ENCODE measurements at regions of chr4 and their contacts with region 1.

Region 1: DNA sequence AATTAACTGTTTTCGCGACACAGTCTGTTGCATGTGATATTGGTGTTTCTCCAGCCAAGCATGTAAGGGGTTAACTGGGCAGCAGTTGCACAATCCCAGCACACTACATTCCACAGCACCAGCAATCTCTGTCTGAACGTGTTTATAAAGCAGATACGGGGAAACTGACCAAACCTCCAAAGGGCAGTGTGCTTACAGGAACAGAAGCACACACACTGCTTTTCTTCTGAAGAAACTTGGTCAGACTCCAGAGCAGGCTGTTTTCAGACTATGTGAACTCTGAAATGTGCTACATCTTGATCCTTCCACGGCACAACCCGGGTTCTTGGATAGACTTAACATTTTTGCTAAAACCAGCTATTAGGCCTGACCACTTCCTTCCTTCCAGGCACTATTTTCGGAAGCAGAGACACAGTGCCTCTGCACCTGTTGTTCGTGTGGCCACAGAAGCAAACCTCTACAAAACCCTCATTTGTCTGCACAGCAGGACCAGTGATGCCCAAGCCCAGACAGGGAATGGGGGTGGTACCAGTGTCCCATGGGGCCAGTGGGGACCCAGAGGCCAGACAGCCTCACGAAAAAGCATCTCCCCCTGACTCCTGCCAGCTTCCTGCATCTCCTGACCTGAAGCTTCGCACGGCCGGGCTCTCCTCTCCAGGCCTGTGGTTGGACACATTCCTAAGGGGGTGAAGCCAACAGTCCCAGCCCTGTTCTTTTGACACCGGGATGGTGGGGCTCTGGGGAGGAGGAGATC is 90.1 kb downstream of the IRF2 start:
- DNase-seq: peak in 1 of 5 donors; percentile 31
- ATAC-seq: peak; percentile 5 to 72 (median 34)
- H3K4me3 ChIP-seq: peak overlapping the region in 9 of 12 donors; percentile 5 to 42 (median 28)
- H3K27ac ChIP-seq: peak overlapping the region; percentile 60 to 96 (median 90)
- H3K4me1 ChIP-seq: peaks cover 18 to 78% (median 64%) of the 10 kb centered on the region in 12 donors
- H3K27me3 ChIP-seq: no peaks in the 10 kb centered on the region
- CTCF ChIP-seq: no peak
- POLR2A ChIP-seq: peak in 1 of 2 donors; percentile 6

Region 2: DNA sequence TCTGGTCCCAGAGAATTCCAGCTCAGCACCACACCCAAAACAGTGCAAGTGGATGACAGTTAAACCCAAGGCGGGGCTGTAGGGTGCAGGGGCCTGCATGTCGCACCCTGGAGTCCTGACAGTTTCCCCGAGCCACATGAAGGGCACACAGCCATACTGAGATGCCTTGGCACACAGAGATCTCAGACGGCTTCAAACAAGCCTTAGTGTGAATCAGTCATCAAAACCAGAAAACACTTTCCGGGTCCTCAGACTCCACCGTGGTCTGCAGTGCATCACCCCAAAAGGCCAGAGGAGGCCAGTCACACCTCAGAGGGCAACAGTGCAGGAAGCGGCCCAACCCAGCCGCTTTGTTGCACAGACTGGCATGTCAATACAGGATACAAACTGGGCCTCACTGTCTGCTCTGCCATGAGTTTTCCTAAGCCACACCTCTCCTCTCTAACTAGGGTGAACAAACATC is 102.0 kb before region 1 on chr4:
- intact Hi-C with region 1: loop called in 2 of 10 experiments (anchors 10 kb)
- DNase-seq: no peak
- ATAC-seq: peak in 3 of 4 donors; percentile 56 to 71 (median 65)
- H3K4me3 ChIP-seq: no peak overlapping the region
- H3K27ac ChIP-seq: peak overlapping the region in 4 of 12 donors; percentile 17 to 39 (median 26)
- H3K4me1 ChIP-seq: peaks cover 0 to 33% (median 6%) of the 10 kb centered on the region in 12 donors
- H3K27me3 ChIP-seq: no peaks in the 10 kb centered on the region
- CTCF ChIP-seq: peak in 2 of 12 donors; percentile 18 to 25
- POLR2A ChIP-seq: no peak

Region 3: DNA sequence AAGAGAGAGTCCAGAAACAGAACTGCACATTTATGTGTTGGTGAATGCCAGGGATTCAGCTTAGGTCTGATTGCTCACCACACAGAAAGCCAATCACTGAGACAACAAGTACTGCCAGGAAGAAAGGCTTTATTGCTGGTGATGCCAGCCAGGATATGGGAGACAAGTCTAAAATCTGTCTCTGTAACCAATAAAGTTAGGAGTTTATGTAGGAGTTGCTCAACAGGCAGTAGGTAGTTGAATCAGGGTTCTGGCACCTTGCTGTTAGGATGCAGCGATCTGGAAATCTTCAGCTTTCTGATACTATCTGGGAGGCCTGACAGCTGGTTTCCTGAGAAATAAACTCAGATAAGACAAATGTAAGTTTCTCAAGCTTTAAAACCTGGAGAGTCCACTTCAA is 46.3 kb before region 1 on chr4:
- intact Hi-C with region 1: loop called in 1 of 10 experiments (anchors 2 kb)
- DNase-seq: no peak
- ATAC-seq: no peak
- H3K4me3 ChIP-seq: no peak overlapping the region
- H3K27ac ChIP-seq: no peak overlapping the region
- H3K4me1 ChIP-seq: peaks cover 0 to 23% (median 2%) of the 10 kb centered on the region in 12 donors
- H3K27me3 ChIP-seq: no peaks in the 10 kb centered on the region
- CTCF ChIP-seq: no peak
- POLR2A ChIP-seq: no peak

Region 4: GRCh38 chr4:184343502-184344177 is 40.6 kb before region 1 on chr4:
- intact Hi-C with region 1: loop called in 7 of 10 experiments (anchors 2 to 5 kb)
- DNase-seq: peak; percentile 75 to 85 (median 83)
- ATAC-seq: peak; percentile 75 to 84 (median 76)
- H3K4me3 ChIP-seq: peak overlapping the region; percentile 31 to 77 (median 62)
- H3K27ac ChIP-seq: peak overlapping the region in 11 of 12 donors; percentile 71 to 94 (median 85)
- H3K4me1 ChIP-seq: peaks cover 8 to 71% (median 47%) of the 10 kb centered on the region in 12 donors
- H3K27me3 ChIP-seq: no peaks in the 10 kb centered on the region
- CTCF ChIP-seq: no peak
- POLR2A ChIP-seq: no peak

Region 5: GRCh38 chr4:184364100-184364921 is 19.9 kb before region 1 on chr4:
- intact Hi-C with region 1: no loop called
- DNase-seq: no peak
- ATAC-seq: peak in 1 of 4 donors; percentile 11
- H3K4me3 ChIP-seq: no peak overlapping the region
- H3K27ac ChIP-seq: no peak overlapping the region
- H3K4me1 ChIP-seq: peaks cover 0 to 29% (median 7%) of the 10 kb centered on the region in 12 donors
- H3K27me3 ChIP-seq: no peaks in the 10 kb centered on the region
- CTCF ChIP-seq: no peak
- POLR2A ChIP-seq: no peak

Region 6: DNA sequence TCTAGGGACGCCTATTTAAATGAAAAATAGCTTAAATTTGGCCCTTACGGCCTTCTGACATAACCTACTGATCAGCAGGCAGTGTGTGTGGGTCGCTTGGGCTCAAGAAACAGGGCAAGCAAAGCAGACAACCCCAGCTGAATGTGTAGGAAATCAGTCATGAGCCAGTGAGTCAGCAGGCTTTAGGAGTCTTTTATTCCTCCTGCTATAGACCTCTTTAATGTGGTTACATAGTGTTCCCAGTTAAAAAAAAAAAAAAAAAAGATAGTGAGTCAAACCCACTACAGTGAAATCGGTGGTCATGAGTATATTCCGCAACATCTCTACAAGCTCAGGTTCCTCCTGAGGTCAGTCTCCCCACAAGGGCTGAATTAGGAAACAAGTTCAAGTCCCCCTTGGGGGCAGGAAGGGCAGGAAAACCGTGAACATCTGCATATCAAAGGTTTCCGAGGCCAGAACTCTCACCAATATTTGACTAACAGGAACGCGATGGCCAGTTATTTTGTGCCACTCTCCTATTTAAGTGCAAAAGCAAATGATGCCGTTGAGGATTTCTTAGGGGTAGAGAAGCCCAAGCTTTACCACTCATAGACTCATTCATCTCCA is 408.8 kb after region 1 on chr4:
- intact Hi-C with region 1: no loop called
- DNase-seq: no peak
- ATAC-seq: peak; percentile 42 to 60 (median 50)
- H3K4me3 ChIP-seq: no peak overlapping the region
- H3K27ac ChIP-seq: peak overlapping the region in 10 of 12 donors; percentile 0 to 68 (median 27)
- H3K4me1 ChIP-seq: peaks cover 0 to 71% (median 35%) of the 10 kb centered on the region in 12 donors
- H3K27me3 ChIP-seq: no peaks in the 10 kb centered on the region
- CTCF ChIP-seq: no peak
- POLR2A ChIP-seq: no peak

Measured in heart left ventricle (tissue), 16 donors.